ENCODE measurements at regions of chr7 and their contacts with region 1.

Region 1: DNA sequence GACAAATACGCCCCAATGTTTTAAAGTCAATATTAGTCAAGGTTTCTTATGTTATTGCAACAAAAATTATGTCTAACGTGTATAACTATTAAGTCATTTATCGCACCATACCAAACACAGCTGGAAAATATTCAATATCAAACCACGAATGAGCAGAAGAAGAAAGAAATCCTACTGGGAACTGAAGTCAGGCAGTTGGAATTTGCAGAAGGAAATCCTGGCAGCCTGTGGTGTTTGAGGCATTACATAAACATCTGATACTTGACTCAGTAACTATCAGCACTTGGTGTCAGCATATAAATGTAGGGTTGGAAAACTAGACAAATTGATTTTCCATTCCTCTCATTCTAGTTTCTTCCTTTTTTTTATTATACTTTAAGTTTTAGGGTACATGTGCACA is 83.4 kb upstream of the NUPR2 start:
- DNase-seq: peak in 1 of 2 experiments; percentile 57
- H3K4me3 ChIP-seq: no peak overlapping the region
- H3K27ac ChIP-seq: no peak overlapping the region
- H3K4me1 ChIP-seq: peaks cover 42% of the 10 kb centered on the region
- H3K27me3 ChIP-seq: no peaks in the 10 kb centered on the region
- CTCF ChIP-seq: no peak

Region 2: GRCh38 chr7:54995631-54996340 is 1203.9 kb before region 1 on chr7:
- CTCF ChIA-PET with region 1: no interaction called
- POLR2A ChIA-PET with region 1: no interaction called
- intact Hi-C with region 1: loop called (anchors 5 kb)
- DNase-seq: peak; percentile 71 to 99
- H3K4me3 ChIP-seq: peak overlapping the region; percentile 13
- H3K27ac ChIP-seq: peak overlapping the region; percentile 89
- H3K4me1 ChIP-seq: peaks cover 56% of the 10 kb centered on the region
- H3K27me3 ChIP-seq: no peaks in the 10 kb centered on the region
- CTCF ChIP-seq: peak; percentile 9; the same call in 1 of the 2 replicates

Region 3: GRCh38 chr7:55365205-55365674 is 834.4 kb before region 1 on chr7 and contains the start of gene LANCL2:
- CTCF ChIA-PET with region 1: no interaction called
- POLR2A ChIA-PET with region 1: no interaction called
- intact Hi-C with region 1: no loop called
- DNase-seq: peak in 1 of 2 experiments; percentile 57
- H3K4me3 ChIP-seq: peak within 1 kb of the TSS; percentile 78
- H3K27ac ChIP-seq: peak within 1 kb of the TSS; percentile 89
- H3K4me1 ChIP-seq: peaks cover 23% of the 10 kb centered on the region
- H3K27me3 ChIP-seq: peaks cover 11% of the 10 kb centered on the region; the same call in 1 of the 2 replicates
- CTCF ChIP-seq: no peak; the same call in 1 of the 2 replicates
- total RNA-seq, gene LANCL2: 21.8 and 21.9 TPM in 2 replicates

Region 4: GRCh38 chr7:55903985-55904759 is 295.5 kb before region 1 on chr7:
- CTCF ChIA-PET with region 1: no interaction called
- POLR2A ChIA-PET with region 1: no interaction called
- intact Hi-C with region 1: no loop called
- DNase-seq: no peak
- H3K4me3 ChIP-seq: no peak overlapping the region
- H3K27ac ChIP-seq: no peak overlapping the region
- H3K4me1 ChIP-seq: no peaks in the 10 kb centered on the region
- H3K27me3 ChIP-seq: no peaks in the 10 kb centered on the region
- CTCF ChIP-seq: no peak

Region 5: GRCh38 chr7:56106108-56107073 is 93.2 kb before region 1 on chr7 and contains the start of gene CHCHD2:
- CTCF ChIA-PET with region 1: no interaction called
- POLR2A ChIA-PET with region 1: no interaction called
- intact Hi-C with region 1: loop called (anchors 1 kb)
- DNase-seq: peak; percentile 99 to 100
- H3K4me3 ChIP-seq: peak within 1 kb of the TSS; percentile 74
- H3K27ac ChIP-seq: peak within 1 kb of the TSS; percentile 73
- H3K4me1 ChIP-seq: peaks cover 25% of the 10 kb centered on the region
- H3K27me3 ChIP-seq: no peaks in the 10 kb centered on the region
- CTCF ChIP-seq: no peak
- total RNA-seq, gene CHCHD2: 978 and 1,041 TPM in 2 replicates